PC-3 (cell line): ENCODE measurements at regions of chr10 and their contacts with region 1.

Region 1: GRCh38 chr10:31437959-31438358 is 118.9 kb downstream of the ZEB1 start:
- DNase-seq: no peak
- ATAC-seq: no peak
- H3K4me3 ChIP-seq: no peak overlapping the region
- H3K27ac ChIP-seq: no peak overlapping the region
- H3K4me1 ChIP-seq: no peaks in the 10 kb centered on the region
- H3K27me3 ChIP-seq: no peaks in the 10 kb centered on the region
- CTCF ChIP-seq: no peak

Region 2: GRCh38 chr10:31340343-31340742 is 97.6 kb before region 1 on chr10:
- CTCF ChIA-PET with region 1: no interaction called
- POLR2A ChIA-PET with region 1: no interaction called
- intact Hi-C with region 1: no loop called
- DNase-seq: no peak
- ATAC-seq: no peak
- H3K4me3 ChIP-seq: no peak overlapping the region
- H3K27ac ChIP-seq: no peak overlapping the region
- H3K4me1 ChIP-seq: no peaks in the 10 kb centered on the region
- H3K27me3 ChIP-seq: no peaks in the 10 kb centered on the region
- CTCF ChIP-seq: no peak

Region 3: DNA sequence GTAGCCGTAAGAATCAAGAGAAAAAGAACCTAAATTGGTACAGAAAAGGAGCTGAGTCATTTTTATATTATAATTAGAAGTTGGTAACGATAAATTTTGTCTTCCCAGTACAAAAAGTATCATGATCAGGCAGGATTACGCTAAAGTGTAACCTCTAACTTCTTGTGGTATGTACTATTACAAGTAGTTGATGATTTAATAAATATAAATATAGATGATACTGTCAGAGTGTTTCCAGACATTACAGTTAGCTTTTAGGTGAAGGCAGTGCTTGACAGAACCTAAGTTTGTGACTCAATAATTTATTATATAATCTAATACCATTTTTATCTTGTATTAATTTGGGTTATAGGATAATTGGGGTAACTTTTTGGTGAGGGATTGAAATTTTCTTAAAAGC is 65.5 kb before region 1 on chr10:
- CTCF ChIA-PET with region 1: no interaction called
- POLR2A ChIA-PET with region 1: no interaction called
- intact Hi-C with region 1: no loop called
- DNase-seq: no peak
- ATAC-seq: no peak
- H3K4me3 ChIP-seq: no peak overlapping the region
- H3K27ac ChIP-seq: no peak overlapping the region
- H3K4me1 ChIP-seq: no peaks in the 10 kb centered on the region
- H3K27me3 ChIP-seq: no peaks in the 10 kb centered on the region
- CTCF ChIP-seq: no peak

Region 4: GRCh38 chr10:31383810-31384588 is 54.0 kb before region 1 on chr10:
- CTCF ChIA-PET with region 1: no interaction called
- POLR2A ChIA-PET with region 1: no interaction called
- intact Hi-C with region 1: loop called (anchors 2 kb)
- DNase-seq: no peak
- ATAC-seq: no peak
- H3K4me3 ChIP-seq: no peak overlapping the region
- H3K27ac ChIP-seq: no peak overlapping the region
- H3K4me1 ChIP-seq: peaks cover 13% of the 10 kb centered on the region
- H3K27me3 ChIP-seq: no peaks in the 10 kb centered on the region
- CTCF ChIP-seq: no peak

Region 5: GRCh38 chr10:31467796-31468535 is 30.0 kb after region 1 on chr10:
- CTCF ChIA-PET with region 1: no interaction called
- POLR2A ChIA-PET with region 1: no interaction called
- intact Hi-C with region 1: no loop called
- DNase-seq: peak; percentile 65
- ATAC-seq: peak; percentile 54
- H3K4me3 ChIP-seq: no peak overlapping the region
- H3K27ac ChIP-seq: no peak overlapping the region
- H3K4me1 ChIP-seq: no peaks in the 10 kb centered on the region
- H3K27me3 ChIP-seq: no peaks in the 10 kb centered on the region
- CTCF ChIP-seq: peak; percentile 81

Region 6: DNA sequence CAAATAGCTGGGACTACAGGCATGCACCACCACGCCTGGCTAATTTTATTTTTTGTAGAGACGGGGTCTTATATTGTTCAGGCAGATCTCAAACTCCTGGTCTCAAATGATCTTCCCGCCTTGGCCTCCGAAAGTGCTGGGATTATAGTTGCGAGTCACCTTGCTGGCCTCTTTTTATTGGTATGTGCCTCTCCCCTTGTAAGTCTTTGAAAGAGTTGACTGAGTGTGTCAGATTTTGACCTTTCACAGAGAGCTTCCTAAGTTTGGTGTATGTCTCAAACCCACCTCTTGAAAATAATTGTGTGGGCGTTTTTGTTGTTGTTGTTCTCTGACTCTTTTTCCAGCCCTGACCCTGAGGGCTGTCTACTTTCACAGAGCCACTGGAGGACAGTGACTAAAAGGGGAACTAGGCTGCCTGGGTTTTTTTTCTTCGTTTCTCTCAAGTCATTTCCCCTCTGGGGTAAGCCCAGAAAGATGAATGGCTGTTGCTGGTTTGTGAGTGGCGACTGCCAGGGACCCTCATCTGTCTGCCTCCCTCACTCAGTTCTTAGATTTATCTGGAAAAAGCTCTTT is 143.9 kb after region 1 on chr10:
- CTCF ChIA-PET with region 1: no interaction called
- POLR2A ChIA-PET with region 1: no interaction called
- intact Hi-C with region 1: no loop called
- DNase-seq: peak; percentile 59
- ATAC-seq: peak; percentile 42
- H3K4me3 ChIP-seq: no peak overlapping the region
- H3K27ac ChIP-seq: peak overlapping the region; percentile 34
- H3K4me1 ChIP-seq: peaks cover 21% of the 10 kb centered on the region
- H3K27me3 ChIP-seq: no peaks in the 10 kb centered on the region
- CTCF ChIP-seq: no peak